ENCODE measurements at regions of chr19 and their contacts with region 1.

Region 1: DNA sequence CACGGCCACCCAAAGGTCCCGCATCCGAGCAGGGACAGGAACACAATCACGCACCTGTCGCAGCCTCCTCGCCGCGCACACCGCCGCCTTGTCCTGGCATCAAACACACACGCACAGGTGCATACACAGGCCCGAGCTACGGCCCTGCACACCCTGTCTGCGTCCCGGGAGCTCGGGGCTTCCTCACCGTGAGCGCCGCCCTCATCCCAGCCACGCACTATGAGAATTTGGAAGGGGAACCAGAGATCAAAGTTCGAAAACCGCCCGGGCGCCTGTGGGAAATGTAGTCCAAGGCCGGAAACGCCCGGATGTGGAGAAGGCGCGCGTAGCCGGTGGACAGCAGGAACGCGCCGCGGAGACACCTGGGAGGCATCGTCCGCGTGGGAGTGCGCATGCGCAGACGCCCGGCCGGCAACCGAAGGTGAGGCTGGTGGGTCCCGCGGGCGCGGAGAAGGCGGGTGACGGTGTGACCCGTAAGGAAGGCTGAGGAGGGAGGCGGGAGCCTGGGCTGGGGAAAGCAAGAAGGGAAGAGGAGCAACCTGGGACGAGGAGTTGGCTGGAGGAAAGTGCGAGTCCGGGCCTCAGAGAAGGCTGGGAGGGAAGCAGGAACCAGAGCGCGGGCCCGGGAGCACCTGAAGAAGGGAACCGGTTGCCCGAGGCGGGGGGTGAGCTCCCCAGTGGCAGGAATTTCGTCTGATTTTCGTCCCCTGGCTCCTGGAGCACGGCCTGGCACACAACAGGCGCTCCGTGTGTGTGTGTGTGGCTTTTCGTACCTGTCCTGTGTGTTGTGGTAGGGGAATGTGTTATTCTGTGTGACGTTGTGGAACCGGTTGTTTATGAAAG is at the start of gene ZNF567:
- DNase-seq: peak; percentile 88 to 98
- H3K4me3 ChIP-seq: peak within 1 kb of the TSS; percentile 68 to 75
- H3K27ac ChIP-seq: peak within 1 kb of the TSS; percentile 39 to 66
- H3K4me1 ChIP-seq: peaks cover 0 to 6% of the 10 kb centered on the region in 2 donors
- H3K27me3 ChIP-seq: no peaks in the 10 kb centered on the region
- CTCF ChIP-seq: no peak
- total RNA-seq, gene ZNF567: 3.7 TPM

Region 2: GRCh38 chr19:36573020-36573885 is 114.2 kb before region 1 on chr19 and contains the start of gene ZNF529:
- intact Hi-C with region 1: loop called (anchors 10 kb)
- DNase-seq: peak; percentile 66 to 95
- H3K4me3 ChIP-seq: peak within 1 kb of the TSS; percentile 79 to 82
- H3K27ac ChIP-seq: peak within 1 kb of the TSS; percentile 83 to 88
- H3K4me1 ChIP-seq: peaks cover 3 to 9% of the 10 kb centered on the region in 2 donors
- H3K27me3 ChIP-seq: no peaks in the 10 kb centered on the region
- CTCF ChIP-seq: no peak
- total RNA-seq, gene ZNF529: 3.8 TPM

Region 3: GRCh38 chr19:36652958-36653357 is 34.5 kb before region 1 on chr19:
- intact Hi-C with region 1: no loop called
- DNase-seq: no peak
- H3K4me3 ChIP-seq: no peak overlapping the region
- H3K27ac ChIP-seq: no peak overlapping the region
- H3K4me1 ChIP-seq: no peaks in the 10 kb centered on the region
- H3K27me3 ChIP-seq: no peaks in the 10 kb centered on the region
- CTCF ChIP-seq: no peak

Region 4: DNA sequence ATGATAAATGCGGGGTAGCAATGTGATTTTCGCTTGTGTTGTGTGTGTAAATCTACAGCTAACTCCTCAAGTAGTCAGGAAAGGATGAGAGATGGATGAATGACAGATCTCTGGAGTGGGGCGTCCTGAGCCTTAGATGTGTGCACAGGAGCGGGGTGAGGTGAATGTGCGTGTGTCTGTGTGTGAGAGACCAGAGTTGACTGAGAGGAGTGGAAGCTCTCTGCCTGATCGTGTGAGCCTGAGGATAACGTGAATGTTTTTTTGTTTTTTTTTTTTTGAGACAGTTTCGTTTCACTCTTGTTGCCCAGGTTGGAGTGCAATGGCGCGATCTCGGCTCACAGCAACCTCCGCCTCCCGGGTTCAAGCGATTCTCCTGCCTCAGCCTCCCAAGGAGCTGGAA is 21.6 kb before region 1 on chr19:
- intact Hi-C with region 1: loop called (anchors 1 kb)
- DNase-seq: no peak
- H3K4me3 ChIP-seq: peak overlapping the region; percentile 74 to 92
- H3K27ac ChIP-seq: no peak overlapping the region
- H3K4me1 ChIP-seq: peaks cover 0 to 3% of the 10 kb centered on the region in 2 donors
- H3K27me3 ChIP-seq: no peaks in the 10 kb centered on the region
- CTCF ChIP-seq: no peak